CD8-positive, alpha-beta T cell (primary cell): ENCODE measurements at regions of chr3 and their contacts with region 1.

Region 1: DNA sequence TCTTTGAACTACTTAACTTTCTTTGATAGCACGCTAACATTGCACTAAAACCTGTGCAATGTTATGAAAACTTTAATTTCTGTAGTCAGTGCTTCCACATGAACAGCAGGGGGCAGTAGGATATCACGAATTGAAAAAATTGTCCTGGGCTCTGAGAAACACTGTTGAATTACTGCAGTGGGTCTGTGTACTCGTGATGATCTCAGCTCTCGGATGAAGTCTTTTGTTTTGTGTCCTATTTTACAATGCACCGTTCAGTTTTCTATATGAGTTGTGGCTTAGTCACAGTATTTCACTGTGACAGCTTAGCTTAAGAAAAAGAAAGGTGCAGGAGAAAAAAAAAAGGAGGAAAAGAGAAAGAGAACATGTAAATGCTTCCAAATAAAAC is 141.3 kb upstream of the CCDC54 start:
- DNase-seq: peak; percentile 6 to 82 (median 41)
- ATAC-seq: peak; percentile 69
- H3K4me3 ChIP-seq: peak overlapping the region in 1 of 2 experiments; percentile 20
- H3K4me3 Mint-ChIP-seq: peak overlapping the region; percentile 65
- H3K27ac ChIP-seq: no peak overlapping the region
- H3K27ac Mint-ChIP-seq: no peak overlapping the region
- H3K4me1 ChIP-seq: peaks cover 4% of the 10 kb centered on the region
- H3K4me1 Mint-ChIP-seq: peaks cover 17% of the 10 kb centered on the region
- H3K27me3 ChIP-seq: no peaks in the 10 kb centered on the region
- H3K27me3 Mint-ChIP-seq: peaks cover 6% of the 10 kb centered on the region
- CTCF ChIP-seq: peak; percentile 98

Region 2: DNA sequence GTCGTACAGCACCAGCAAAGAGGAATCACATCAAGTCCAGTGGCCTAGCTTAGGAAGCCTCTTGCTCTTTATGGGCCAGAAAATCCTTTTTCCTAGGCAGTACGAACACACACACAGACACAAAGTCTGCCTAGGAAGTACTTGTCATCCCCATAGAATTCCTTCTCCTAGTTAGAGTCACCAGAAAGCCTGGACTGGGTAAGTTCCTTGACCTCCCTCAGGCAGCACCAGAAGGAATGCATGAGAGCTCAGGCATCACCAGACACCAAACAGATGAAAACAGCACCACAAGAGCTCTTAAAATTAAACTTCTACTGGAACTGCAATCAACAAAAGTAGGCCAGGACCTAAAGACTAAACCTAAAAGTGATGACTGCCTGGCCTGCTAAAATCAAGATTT is 51.5 kb before region 1 on chr3:
- CTCF ChIA-PET with region 1: no interaction called
- POLR2A ChIA-PET with region 1: no interaction called
- intact Hi-C with region 1: no loop called
- DNase-seq: no peak
- ATAC-seq: no peak
- H3K4me3 ChIP-seq: no peak overlapping the region
- H3K4me3 Mint-ChIP-seq: no peak overlapping the region
- H3K27ac ChIP-seq: no peak overlapping the region
- H3K27ac Mint-ChIP-seq: no peak overlapping the region
- H3K4me1 ChIP-seq: no peaks in the 10 kb centered on the region
- H3K4me1 Mint-ChIP-seq: no peaks in the 10 kb centered on the region
- H3K27me3 ChIP-seq: no peaks in the 10 kb centered on the region
- H3K27me3 Mint-ChIP-seq: no peaks in the 10 kb centered on the region
- CTCF ChIP-seq: no peak

Region 3: DNA sequence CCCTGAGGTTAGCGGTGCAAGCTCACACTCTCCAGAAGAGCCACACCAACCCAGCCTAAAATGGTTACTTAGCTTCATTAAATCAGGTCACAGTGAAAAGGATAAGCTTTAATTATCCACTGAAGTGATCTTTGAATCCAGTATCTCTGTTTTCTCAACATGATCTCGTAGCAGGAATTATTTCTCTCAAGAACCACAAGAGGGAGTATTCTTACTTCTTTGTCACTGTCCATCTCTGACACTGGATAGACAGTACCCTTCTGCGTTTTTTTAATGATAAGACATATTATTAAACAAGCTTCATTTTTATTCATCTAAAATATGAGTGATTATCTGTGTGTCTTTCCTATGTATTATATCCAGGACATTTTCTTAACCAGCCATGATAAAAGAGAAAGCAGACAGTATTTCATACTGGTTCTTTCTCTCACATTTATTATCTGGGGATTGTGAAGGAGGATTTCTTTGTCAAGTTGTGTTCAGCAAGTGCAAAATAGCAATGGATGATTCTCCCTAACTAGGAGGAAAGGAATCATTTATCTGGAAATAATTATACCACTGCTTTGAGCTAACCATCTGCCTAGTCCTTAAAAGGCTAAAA is 36.0 kb after region 1 on chr3:
- CTCF ChIA-PET with region 1: interaction called, 13 read pairs
- POLR2A ChIA-PET with region 1: interaction called, 3 read pairs
- intact Hi-C with region 1: loop called in 1 of 2 experiments (anchors 2 kb)
- DNase-seq: peak in 2 of 9 experiments; percentile 12 to 35
- ATAC-seq: peak; percentile 38
- H3K4me3 ChIP-seq: no peak overlapping the region
- H3K4me3 Mint-ChIP-seq: no peak overlapping the region
- H3K27ac ChIP-seq: no peak overlapping the region
- H3K27ac Mint-ChIP-seq: no peak overlapping the region
- H3K4me1 ChIP-seq: no peaks in the 10 kb centered on the region
- H3K4me1 Mint-ChIP-seq: no peaks in the 10 kb centered on the region
- H3K27me3 ChIP-seq: peaks cover 0 to 5% of the 10 kb centered on the region in 2 experiments
- H3K27me3 Mint-ChIP-seq: peaks cover 7% of the 10 kb centered on the region
- CTCF ChIP-seq: peak; percentile 69

Region 4: GRCh38 chr3:107458871-107459270 is 222.9 kb after region 1 on chr3:
- CTCF ChIA-PET with region 1: interaction called, 12 read pairs
- POLR2A ChIA-PET with region 1: no interaction called
- intact Hi-C with region 1: no loop called
- DNase-seq: no peak
- ATAC-seq: no peak
- H3K4me3 ChIP-seq: no peak overlapping the region
- H3K4me3 Mint-ChIP-seq: no peak overlapping the region
- H3K27ac ChIP-seq: no peak overlapping the region
- H3K27ac Mint-ChIP-seq: no peak overlapping the region
- H3K4me1 ChIP-seq: no peaks in the 10 kb centered on the region
- H3K4me1 Mint-ChIP-seq: no peaks in the 10 kb centered on the region
- H3K27me3 ChIP-seq: peaks cover 0 to 3% of the 10 kb centered on the region in 2 experiments
- H3K27me3 Mint-ChIP-seq: no peaks in the 10 kb centered on the region
- CTCF ChIP-seq: no peak

Region 5: GRCh38 chr3:107660306-107660976 is 424.5 kb after region 1 on chr3:
- CTCF ChIA-PET with region 1: interaction called, 5 read pairs
- POLR2A ChIA-PET with region 1: no interaction called
- intact Hi-C with region 1: loop called in 1 of 2 experiments (anchors 10 kb)
- DNase-seq: peak in 2 of 9 experiments; percentile 52 to 61
- ATAC-seq: no peak
- H3K4me3 ChIP-seq: no peak overlapping the region
- H3K4me3 Mint-ChIP-seq: no peak overlapping the region
- H3K27ac ChIP-seq: no peak overlapping the region
- H3K27ac Mint-ChIP-seq: no peak overlapping the region
- H3K4me1 ChIP-seq: peaks cover 17% of the 10 kb centered on the region
- H3K4me1 Mint-ChIP-seq: peaks cover 31% of the 10 kb centered on the region
- H3K27me3 ChIP-seq: no peaks in the 10 kb centered on the region
- H3K27me3 Mint-ChIP-seq: no peaks in the 10 kb centered on the region
- CTCF ChIP-seq: peak; percentile 73

Region 6: GRCh38 chr3:107846279-107846852 is 610.4 kb after region 1 on chr3:
- CTCF ChIA-PET with region 1: no interaction called
- POLR2A ChIA-PET with region 1: no interaction called
- intact Hi-C with region 1: loop called (anchors 1 to 2 kb)
- DNase-seq: peak in 4 of 9 experiments; percentile 18 to 48 (median 38)
- ATAC-seq: no peak
- H3K4me3 ChIP-seq: no peak overlapping the region
- H3K4me3 Mint-ChIP-seq: no peak overlapping the region
- H3K27ac ChIP-seq: no peak overlapping the region
- H3K27ac Mint-ChIP-seq: no peak overlapping the region
- H3K4me1 ChIP-seq: no peaks in the 10 kb centered on the region
- H3K4me1 Mint-ChIP-seq: no peaks in the 10 kb centered on the region
- H3K27me3 ChIP-seq: no peaks in the 10 kb centered on the region
- H3K27me3 Mint-ChIP-seq: peaks cover 6% of the 10 kb centered on the region
- CTCF ChIP-seq: no peak

Region 7: DNA sequence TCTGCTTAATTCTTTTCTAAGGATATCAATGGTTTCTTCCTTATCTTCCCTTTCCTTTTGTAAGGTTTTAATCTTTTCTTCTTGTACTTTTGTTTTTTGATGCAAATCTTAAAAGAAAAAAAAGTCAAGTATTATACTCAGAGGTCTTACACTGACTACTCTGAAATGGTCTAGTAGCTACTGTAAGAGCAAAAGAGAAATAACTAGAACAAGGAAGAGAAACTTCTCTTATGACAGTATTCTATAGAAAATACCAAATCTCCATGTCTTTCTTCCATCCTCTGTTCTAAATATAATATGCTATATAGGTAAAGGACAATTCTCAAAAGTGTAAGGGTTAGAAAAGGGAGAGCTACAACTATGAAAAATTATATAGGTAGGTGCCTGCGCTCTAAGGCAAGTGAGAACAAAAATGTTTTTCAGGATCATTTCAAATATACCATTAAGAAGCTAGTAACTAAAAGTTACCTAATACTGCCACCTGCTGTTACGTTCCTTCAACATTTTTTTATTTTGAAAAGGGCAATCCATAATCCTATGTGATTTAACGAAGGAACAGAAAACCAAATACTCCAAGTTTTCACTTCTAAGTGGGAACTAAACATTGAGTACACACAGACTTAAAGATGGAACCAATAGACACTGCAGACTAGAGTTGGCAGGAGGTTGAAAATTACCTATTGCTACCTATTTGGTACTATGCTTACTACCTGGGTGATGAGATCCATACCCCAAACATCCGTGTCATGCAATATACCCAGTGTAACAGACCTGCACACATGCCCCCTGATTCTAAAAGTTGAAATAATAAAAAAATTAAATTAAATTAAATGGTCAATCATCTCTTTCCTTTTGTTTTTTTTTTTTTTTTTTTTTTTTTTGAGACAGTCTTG is 1316.6 kb after region 1 on chr3:
- CTCF ChIA-PET with region 1: interaction called, 7 read pairs
- POLR2A ChIA-PET with region 1: no interaction called
- intact Hi-C with region 1: loop called (anchors 1 to 5 kb)
- DNase-seq: peak in 2 of 9 experiments; percentile 59 to 65
- ATAC-seq: peak; percentile 52
- H3K4me3 ChIP-seq: no peak overlapping the region
- H3K4me3 Mint-ChIP-seq: no peak overlapping the region
- H3K27ac ChIP-seq: no peak overlapping the region
- H3K27ac Mint-ChIP-seq: no peak overlapping the region
- H3K4me1 ChIP-seq: no peaks in the 10 kb centered on the region
- H3K4me1 Mint-ChIP-seq: peaks cover 2% of the 10 kb centered on the region
- H3K27me3 ChIP-seq: no peaks in the 10 kb centered on the region
- H3K27me3 Mint-ChIP-seq: no peaks in the 10 kb centered on the region
- CTCF ChIP-seq: peak; percentile 58